ENCODE measurements at regions of chr18 and their contacts with region 1.

Region 1: GRCh38 chr18:12934454-12935071 is 13.2 kb upstream of the SEH1L start:
- DNase-seq: peak; percentile 94

Region 2: DNA sequence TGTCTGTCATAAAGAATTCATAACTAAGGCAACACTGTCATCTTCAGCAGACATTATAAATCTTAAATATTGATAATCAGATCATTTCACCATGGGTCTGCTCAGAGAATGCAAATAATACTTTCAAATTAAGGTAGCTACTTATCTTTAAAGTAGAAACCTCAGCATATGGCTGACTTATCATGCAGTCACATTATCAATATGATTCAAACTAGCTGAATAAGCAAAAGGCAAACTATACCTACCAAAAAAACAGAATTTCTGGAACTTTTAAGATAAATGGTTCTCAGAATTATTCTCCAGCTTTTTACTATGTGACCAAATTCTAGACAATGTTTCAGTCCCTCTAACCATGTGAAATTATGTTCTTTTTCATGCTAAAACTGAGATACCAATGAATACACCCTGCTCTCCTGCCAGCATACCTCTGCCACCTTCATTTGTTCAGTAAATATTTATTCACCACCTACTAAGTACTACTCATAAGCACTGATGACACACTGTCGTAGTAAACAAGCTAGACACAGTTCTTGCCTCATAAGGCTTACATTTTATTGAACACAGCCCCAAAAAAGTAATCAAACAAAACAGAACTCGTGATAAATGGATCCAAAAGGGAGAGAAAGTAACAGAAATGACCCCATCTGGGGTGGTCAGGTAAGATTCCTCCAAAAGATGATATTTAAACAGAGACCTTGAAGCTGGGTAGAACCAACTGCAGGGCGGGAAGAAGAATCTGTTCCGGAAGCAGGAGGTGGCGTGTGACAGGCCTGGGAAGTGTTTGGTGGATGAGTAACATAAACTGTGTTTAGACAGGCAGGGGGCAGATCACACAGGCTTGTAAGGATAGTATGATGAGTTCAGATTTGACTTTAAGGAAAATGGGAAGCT is 294.3 kb before region 1 on chr18:
- intact Hi-C with region 1: no loop called
- DNase-seq: no peak

Region 3: DNA sequence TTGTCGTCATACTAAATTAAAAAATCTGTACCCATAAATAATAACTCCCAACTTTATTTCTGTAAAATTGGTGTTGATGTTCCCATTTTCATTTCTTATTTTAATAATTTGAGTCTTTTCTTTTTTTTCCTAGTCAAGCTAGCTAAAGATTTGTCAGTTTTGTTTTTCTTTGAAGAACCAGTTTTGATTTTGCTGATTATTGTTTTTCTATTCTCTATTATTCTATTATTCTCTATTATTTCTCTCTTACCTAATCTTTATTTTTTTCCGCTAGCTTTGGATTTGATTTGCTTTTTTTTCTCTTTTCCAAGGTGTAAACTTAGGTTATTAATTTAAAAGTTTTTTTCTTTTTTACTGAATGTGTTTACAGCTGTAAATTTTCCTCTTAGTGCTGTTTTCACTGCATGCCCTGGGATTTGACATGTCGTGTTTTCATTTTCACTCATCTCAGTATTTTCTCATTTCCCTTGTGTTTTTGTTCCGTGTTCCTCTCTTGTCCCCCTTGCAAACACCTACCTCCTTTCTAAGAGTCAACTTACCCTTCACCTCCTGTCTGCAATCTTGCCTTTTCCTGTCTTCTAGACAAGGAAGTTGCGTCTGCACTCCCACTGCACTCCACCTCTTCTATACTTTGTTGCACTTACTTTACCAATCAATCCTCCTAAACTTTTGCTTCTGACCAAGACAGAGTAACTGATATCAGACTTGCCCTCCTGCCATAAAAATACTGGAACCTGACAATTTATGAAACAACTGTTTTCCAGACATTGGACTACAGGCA is 212.9 kb before region 1 on chr18:
- intact Hi-C with region 1: loop called (anchors 2 to 5 kb)
- DNase-seq: no peak

Region 4: DNA sequence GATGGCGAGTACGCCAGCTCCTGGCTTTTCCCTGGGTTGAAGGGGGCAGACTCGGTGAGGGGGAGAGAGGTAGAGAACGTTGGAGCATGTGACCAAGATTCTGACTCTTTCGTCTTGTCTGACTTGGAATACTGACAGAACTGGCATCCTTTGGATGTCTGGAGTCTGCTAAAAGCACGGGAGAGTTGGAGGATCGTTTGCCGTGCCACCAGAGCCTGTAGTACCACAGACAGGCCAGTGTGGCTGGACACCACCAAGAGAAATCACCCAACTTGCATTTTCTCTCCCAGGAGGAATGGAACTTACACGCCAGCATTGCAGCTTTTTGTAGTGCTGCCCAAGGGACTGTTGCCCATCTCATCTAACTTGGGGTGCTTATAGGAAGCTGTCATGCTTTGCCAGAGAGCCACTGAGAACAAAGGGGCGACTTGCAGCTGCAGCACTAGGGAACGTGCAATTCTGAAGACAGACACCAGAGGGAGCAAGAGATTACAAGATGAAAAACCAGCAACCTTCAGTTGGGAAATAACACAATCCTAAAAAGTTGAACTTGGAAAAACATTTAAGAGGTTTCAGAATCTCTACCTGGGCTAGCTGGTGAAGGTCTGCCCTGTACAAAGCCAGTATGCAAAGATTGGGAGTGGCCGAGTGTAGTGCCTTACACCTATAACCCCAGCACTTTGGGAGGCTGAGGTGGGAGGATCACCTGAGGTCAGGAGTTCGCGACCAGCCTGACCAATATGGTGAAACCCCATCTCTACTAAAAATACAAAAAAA is 207.6 kb before region 1 on chr18:
- intact Hi-C with region 1: loop called (anchors 2 to 5 kb)
- DNase-seq: no peak

Region 5: DNA sequence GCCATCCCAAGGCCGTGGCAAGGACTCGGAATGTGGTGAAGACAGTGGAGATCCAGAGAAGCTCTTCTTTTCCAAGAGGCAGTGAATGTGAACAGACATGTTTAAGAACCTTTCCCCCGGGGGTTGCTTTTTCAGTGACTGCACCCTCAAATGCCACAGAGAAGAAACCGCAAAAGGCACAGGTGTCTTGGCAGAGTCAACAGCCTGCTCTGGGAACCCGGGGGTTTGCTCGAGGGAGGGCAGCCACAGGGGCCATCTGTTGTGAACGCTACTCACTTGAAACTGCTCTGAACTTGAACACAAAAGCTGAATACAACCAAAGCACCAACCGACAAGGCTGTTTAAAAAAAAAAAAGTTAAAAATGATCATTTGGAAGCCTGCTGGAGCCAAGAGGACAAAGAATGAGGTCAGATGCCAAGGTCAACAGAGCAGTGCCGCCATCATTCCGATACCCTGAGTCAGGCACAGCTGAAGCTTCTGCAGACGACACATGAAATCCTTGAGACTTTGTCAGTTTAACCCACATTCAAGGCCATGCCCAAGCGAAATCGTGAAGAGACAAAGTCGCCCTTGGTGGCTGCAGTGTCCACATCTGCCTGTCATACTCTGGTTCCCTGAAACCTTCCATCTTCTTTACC is 184.4 kb before region 1 on chr18:
- intact Hi-C with region 1: loop called in 1 of 2 experiments (anchors 5 kb)
- DNase-seq: no peak

Region 6: DNA sequence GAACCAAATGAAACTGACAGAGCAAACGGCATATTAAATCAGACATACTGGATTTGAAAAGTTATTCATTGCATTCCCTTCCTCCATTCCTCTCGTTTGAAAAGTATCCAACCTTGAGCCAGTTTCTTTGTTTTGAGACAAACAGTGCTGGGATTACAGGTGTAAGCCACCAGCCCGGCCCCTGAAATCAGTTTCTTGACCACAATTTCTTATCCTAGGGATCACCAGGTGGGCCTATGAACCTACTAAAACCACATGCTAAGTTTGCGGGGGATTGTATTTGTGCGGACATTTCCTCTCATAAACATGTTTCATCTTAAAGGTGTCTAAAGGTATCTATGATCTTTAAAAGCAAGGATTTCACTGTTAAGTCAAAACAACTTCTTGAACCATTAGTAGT is 62.2 kb before region 1 on chr18:
- intact Hi-C with region 1: no loop called
- DNase-seq: no peak

Region 7: DNA sequence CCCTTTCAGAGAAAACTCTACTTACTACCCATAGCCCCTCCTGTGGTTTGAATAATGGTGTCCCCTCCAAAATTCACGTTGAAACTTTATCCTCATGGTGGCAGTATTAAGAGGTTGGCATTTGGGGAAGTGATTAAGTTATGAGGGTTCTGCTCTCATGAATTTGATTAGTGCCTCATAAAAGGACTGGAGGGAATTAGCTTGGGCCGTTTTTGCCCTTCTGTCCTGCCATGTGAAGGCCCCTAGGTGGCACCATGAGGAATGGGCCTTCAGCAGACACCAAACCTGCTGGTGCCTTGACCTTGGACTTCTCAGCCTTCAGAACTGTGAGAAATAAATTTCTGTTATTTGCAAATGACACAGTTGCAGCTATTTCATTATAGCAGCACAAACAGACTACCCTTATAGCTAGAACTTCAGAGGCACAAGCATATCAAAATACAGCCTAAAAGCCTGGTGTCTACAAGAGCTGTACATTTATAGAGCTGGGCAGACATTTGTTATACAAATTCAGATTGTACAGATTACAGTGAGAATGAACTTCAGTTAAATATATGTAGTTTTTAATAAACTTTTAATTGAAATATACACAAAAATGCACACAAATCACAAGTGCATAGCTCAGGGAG is 48.0 kb before region 1 on chr18:
- intact Hi-C with region 1: loop called in 1 of 2 experiments (anchors 5 kb)
- DNase-seq: no peak

Region 8: GRCh38 chr18:13619505-13620202 is 685.1 kb after region 1 on chr18:
- intact Hi-C with region 1: loop called in 1 of 2 experiments (anchors 5 kb)
- DNase-seq: no peak

Region 9: GRCh38 chr18:14074187-14074586 is 1139.6 kb after region 1 on chr18:
- intact Hi-C with region 1: loop called in 1 of 2 experiments (anchors 5 kb)
- DNase-seq: no peak